HCT116 (cell line): ENCODE measurements at regions of chr3 and their contacts with region 1.

Region 1: DNA sequence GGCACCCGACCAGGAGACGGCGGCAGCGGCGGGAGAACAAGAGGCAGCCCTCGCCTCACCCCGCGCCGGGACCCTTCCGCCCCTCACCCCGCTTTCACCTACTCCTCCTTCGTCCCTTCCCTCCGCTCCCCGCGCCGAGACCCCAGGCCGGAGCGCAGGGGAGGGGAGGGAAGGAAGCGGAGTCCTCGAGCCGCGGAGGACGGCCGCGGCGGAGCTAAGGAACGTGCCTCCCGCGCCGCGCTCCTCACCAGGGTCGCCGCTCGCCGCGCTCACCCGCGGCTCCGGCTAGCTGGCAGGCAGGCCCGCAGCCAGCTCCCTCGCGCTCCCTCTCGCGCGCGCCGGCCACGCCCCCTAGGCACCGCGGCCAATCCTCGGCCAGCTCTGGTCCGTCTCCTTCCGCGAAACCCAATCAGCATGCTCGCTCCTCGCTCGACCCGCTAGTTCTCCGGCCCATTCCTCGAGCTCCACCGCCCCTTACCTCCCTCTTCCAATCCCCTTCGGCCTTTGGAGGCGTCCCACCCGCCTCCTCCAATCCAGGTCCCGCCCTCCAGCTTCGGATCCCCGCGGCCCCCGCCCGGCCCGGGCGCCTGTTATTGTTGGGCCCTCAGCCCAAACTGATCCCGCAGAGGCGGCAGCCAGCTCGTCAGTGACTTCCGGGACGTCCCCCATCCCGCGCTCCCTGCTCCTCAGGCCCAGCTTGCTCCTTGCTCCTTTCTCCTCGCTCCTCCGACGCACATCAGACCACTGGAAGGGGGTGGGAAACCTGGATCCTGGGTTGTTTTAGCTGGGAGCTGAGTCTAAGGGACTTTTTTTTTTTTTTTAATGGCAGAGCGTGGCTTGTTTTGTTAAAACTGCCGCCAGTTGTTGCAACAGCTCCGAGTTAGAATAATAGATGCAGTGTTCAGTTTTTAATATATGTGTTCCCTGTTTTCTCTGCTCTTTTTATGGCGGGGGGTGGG is at the start of gene DCBLD2:
- DNase-seq: peak; percentile 96
- ATAC-seq: peak; percentile 91
- H3K4me3 ChIP-seq: peak within 1 kb of the TSS; percentile 82 to 89
- H3K27ac ChIP-seq: peak within 1 kb of the TSS; percentile 99
- H3K4me1 ChIP-seq: peaks cover 42 to 62% of the 10 kb centered on the region in 2 experiments
- H3K27me3 ChIP-seq: no peaks in the 10 kb centered on the region
- CTCF ChIP-seq: no peak
- POLR2A ChIP-seq: peak; percentile 95
- RAD21 ChIP-seq: peak; percentile 20; the same call in 1 of the 2 replicates
- total RNA-seq, gene DCBLD2: 532 TPM

Region 2: DNA sequence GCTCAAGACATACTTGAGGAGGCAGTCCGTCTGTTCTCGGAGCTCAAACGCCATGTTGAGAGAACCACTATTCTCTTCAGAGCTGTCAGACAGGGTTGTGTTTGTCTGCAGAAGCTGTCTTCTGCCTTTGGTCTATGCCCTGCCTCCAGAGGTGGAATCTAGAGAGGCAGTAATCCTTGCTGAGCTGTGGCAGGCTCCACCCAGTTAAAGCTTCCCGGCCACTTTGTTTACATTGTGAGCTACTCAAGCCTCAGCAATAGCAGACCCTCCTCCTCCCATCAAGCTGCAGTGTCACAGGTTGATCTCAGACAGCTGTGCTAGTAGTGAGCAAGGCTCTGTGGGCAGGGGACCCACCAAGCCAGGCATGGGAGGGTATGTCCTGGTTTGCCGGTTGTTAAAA is 805.8 kb before region 1 on chr3:
- CTCF ChIA-PET with region 1: no interaction called
- POLR2A ChIA-PET with region 1: no interaction called
- RAD21 ChIA-PET with region 1: no interaction called
- intact Hi-C with region 1: no loop called
- DNase-seq: no peak
- ATAC-seq: no peak
- H3K4me3 ChIP-seq: no peak overlapping the region
- H3K27ac ChIP-seq: no peak overlapping the region
- H3K4me1 ChIP-seq: no peaks in the 10 kb centered on the region
- H3K27me3 ChIP-seq: no peaks in the 10 kb centered on the region
- CTCF ChIP-seq: no peak
- POLR2A ChIP-seq: no peak
- RAD21 ChIP-seq: no peak

Region 3: GRCh38 chr3:98914210-98915080 is 12.8 kb after region 1 on chr3:
- CTCF ChIA-PET with region 1: interaction called, 3 read pairs
- POLR2A ChIA-PET with region 1: interaction called, 65 read pairs
- RAD21 ChIA-PET with region 1: no interaction called
- intact Hi-C with region 1: no loop called
- DNase-seq: no peak
- ATAC-seq: peak; percentile 86
- H3K4me3 ChIP-seq: peak overlapping the region in 1 of 2 experiments; percentile 1; a peak in 1 of 4 replicates
- H3K27ac ChIP-seq: peak overlapping the region; percentile 44
- H3K4me1 ChIP-seq: peaks cover 22 to 39% of the 10 kb centered on the region in 2 experiments
- H3K27me3 ChIP-seq: no peaks in the 10 kb centered on the region
- CTCF ChIP-seq: no peak
- POLR2A ChIP-seq: no peak
- RAD21 ChIP-seq: no peak

Region 4: DNA sequence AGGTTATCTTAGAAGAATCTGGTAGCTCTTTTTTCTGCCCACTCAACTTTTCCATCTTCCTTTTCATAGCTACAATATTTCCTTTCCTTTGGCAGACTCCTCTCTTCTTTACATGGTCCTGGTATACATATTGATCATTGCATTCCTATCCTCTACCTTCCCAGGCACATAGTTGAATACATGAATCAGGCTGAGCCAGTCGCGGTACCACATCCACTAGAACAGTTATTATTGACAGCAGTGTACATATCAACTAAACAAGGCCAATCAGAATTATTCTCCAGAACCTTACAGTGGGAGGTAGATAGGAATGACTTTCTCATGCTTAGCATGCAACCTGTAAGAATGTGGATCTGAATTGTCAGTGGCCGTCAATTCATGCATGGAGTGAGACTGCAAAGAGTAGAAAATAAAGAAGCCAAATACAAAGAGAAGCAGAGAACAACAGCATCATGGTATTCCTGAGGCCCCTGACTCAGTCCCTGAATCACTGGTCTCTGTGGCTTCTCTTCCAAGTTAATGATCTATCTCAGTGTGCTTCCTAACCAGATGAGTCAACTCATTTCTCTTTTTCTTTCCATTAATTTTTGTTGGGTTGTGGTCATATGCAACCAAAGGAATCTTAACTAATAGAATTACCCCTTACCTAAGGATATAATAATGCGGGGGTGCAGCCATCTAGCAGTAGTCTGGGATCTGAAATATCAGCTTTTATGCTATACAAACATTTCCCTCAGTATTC is 60.7 kb after region 1 on chr3:
- CTCF ChIA-PET with region 1: interaction called, 4 read pairs
- POLR2A ChIA-PET with region 1: interaction called, 310 read pairs
- RAD21 ChIA-PET with region 1: no interaction called
- intact Hi-C with region 1: no loop called
- DNase-seq: peak; percentile 92
- ATAC-seq: peak; percentile 77
- H3K4me3 ChIP-seq: peak overlapping the region in 1 of 2 experiments; percentile 32; a peak in 3 of 4 replicates
- H3K27ac ChIP-seq: peak overlapping the region; percentile 97
- H3K4me1 ChIP-seq: peaks cover 91 to 95% of the 10 kb centered on the region in 2 experiments
- H3K27me3 ChIP-seq: no peaks in the 10 kb centered on the region
- CTCF ChIP-seq: no peak
- POLR2A ChIP-seq: no peak
- RAD21 ChIP-seq: no peak; the same call in 1 of the 2 replicates

Region 5: GRCh38 chr3:98980915-98981596 is 79.4 kb after region 1 on chr3:
- CTCF ChIA-PET with region 1: interaction called, 4 read pairs
- POLR2A ChIA-PET with region 1: interaction called, 70 read pairs
- RAD21 ChIA-PET with region 1: interaction called in 1 of 2 experiments, 3 read pairs
- intact Hi-C with region 1: loop called (anchors 2 kb)
- DNase-seq: peak; percentile 57
- ATAC-seq: peak; percentile 49
- H3K4me3 ChIP-seq: peak overlapping the region; percentile 16 to 37; a peak in 3 of 4 replicates
- H3K27ac ChIP-seq: peak overlapping the region; percentile 88
- H3K4me1 ChIP-seq: peaks cover 90 to 100% of the 10 kb centered on the region in 2 experiments
- H3K27me3 ChIP-seq: no peaks in the 10 kb centered on the region
- CTCF ChIP-seq: no peak
- POLR2A ChIP-seq: no peak
- RAD21 ChIP-seq: no peak